ENCODE measurements at regions of chr21 and their contacts with region 1.

Region 1: GRCh38 chr21:15943009-15943666 is 213.4 kb downstream of the USP25 start:
- DNase-seq: no peak
- H3K4me3 ChIP-seq: no peak overlapping the region
- H3K27ac ChIP-seq: no peak overlapping the region
- H3K4me1 ChIP-seq: no peaks in the 10 kb centered on the region
- H3K27me3 ChIP-seq: no peaks in the 10 kb centered on the region
- CTCF ChIP-seq: no peak
- EP300 ChIP-seq: no peak
- POLR2A ChIP-seq: no peak

Region 2: GRCh38 chr21:15908187-15908586 is 35.0 kb before region 1 on chr21:
- in situ Hi-C with region 1: no loop called
- intact Hi-C with region 1: loop called (anchors 2 kb)
- DNase-seq: no peak
- H3K4me3 ChIP-seq: no peak overlapping the region
- H3K27ac ChIP-seq: no peak overlapping the region
- H3K4me1 ChIP-seq: no peaks in the 10 kb centered on the region
- H3K27me3 ChIP-seq: no peaks in the 10 kb centered on the region
- CTCF ChIP-seq: no peak
- EP300 ChIP-seq: no peak
- POLR2A ChIP-seq: no peak

Region 3: GRCh38 chr21:16342932-16343331 is 399.8 kb after region 1 on chr21:
- in situ Hi-C with region 1: no loop called
- intact Hi-C with region 1: no loop called
- DNase-seq: no peak
- H3K4me3 ChIP-seq: no peak overlapping the region
- H3K27ac ChIP-seq: no peak overlapping the region
- H3K4me1 ChIP-seq: no peaks in the 10 kb centered on the region
- H3K27me3 ChIP-seq: no peaks in the 10 kb centered on the region
- CTCF ChIP-seq: no peak
- EP300 ChIP-seq: no peak
- POLR2A ChIP-seq: no peak